Naive thymus-derived CD4-positive, alpha-beta T cell (primary cell): ENCODE measurements at regions of chr9 and their contacts with region 1.

Region 1: GRCh38 chr9:5425006-5425628 is 12.6 kb downstream of the PLGRKT start:
- DNase-seq: peak in 6 of 9 donors; percentile 20 to 54 (median 43)
- ATAC-seq: peak; percentile 68
- H3K4me3 ChIP-seq: no peak overlapping the region
- H3K4me3 Mint-ChIP-seq: no peak overlapping the region
- H3K27ac ChIP-seq: no peak overlapping the region
- H3K27ac Mint-ChIP-seq: no peak overlapping the region
- H3K4me1 ChIP-seq: no peaks in the 10 kb centered on the region
- H3K4me1 Mint-ChIP-seq: peaks cover 0 to 15% (median 6%) of the 10 kb centered on the region in 7 donors
- H3K27me3 ChIP-seq: no peaks in the 10 kb centered on the region
- H3K27me3 Mint-ChIP-seq: no peaks in the 10 kb centered on the region

Region 2: GRCh38 chr9:5263351-5264218 is 161.5 kb before region 1 on chr9:
- CTCF ChIA-PET with region 1: no interaction called
- POLR2A ChIA-PET with region 1: no interaction called
- intact Hi-C with region 1: loop called in 1 of 2 experiments (anchors 10 kb)
- DNase-seq: peak in 5 of 9 donors; percentile 1 to 23 (median 4)
- ATAC-seq: no peak
- H3K4me3 ChIP-seq: no peak overlapping the region
- H3K4me3 Mint-ChIP-seq: peak overlapping the region in 6 of 10 donors; percentile 23 to 36 (median 30)
- H3K27ac ChIP-seq: no peak overlapping the region
- H3K27ac Mint-ChIP-seq: peak overlapping the region in 2 of 9 donors; percentile 0 to 19
- H3K4me1 ChIP-seq: no peaks in the 10 kb centered on the region
- H3K4me1 Mint-ChIP-seq: peaks cover 9 to 24% (median 17%) of the 10 kb centered on the region in 7 donors
- H3K27me3 ChIP-seq: no peaks in the 10 kb centered on the region
- H3K27me3 Mint-ChIP-seq: no peaks in the 10 kb centered on the region